ENCODE measurements at regions of chr5 and their contacts with region 1.

Region 1: GRCh38 chr5:128201065-128201926 is 117.7 kb downstream of the SLC12A2 start:
- DNase-seq: peak; percentile 52 to 91
- H3K4me3 ChIP-seq: peak overlapping the region; percentile 4
- H3K4me1 ChIP-seq: peaks cover 7% of the 10 kb centered on the region; the same call in 1 of the 2 replicates
- H3K27me3 ChIP-seq: no peaks in the 10 kb centered on the region

Region 2: DNA sequence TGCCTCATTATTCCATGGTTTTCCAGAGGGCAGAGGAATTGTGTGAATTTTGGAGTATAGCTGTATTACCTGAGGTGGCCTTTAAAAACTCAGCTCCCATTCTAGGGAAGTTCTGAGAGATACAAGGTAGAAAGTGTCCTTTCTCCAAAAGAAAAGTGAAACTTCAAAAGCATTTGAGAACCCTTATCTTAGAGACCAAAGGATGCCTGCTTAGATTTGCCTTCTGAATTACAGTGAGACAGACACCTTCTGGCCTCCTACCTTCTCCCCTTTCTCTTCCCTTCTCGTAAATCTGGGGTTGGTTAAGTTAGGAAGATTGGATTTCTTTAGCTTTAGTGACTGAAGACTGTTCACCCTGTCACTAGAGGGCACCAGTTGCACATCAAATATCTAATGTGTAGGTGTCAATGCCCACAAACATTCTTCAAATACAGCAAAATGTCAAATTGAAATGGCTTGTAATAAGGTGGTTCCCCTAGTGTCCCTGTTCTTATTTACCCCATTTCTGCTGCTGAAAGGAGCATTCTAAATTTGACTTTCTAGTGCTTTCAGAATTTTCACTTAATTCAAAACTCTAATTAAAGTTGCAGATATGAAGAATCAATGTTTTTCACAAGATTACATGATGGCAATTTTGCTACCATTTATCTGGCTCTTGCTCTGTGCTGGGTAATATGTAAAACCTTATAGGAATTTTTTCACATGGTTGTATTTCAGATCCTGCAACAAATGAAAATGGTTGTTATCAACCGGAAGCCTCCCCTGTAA is 637.1 kb before region 1 on chr5:
- in situ Hi-C with region 1: loop called (anchors 5 kb)
- DNase-seq: peak; percentile 67 to 76
- H3K4me3 ChIP-seq: no peak overlapping the region
- H3K4me1 ChIP-seq: no peaks in the 10 kb centered on the region
- H3K27me3 ChIP-seq: peaks cover 4% of the 10 kb centered on the region

Region 3: DNA sequence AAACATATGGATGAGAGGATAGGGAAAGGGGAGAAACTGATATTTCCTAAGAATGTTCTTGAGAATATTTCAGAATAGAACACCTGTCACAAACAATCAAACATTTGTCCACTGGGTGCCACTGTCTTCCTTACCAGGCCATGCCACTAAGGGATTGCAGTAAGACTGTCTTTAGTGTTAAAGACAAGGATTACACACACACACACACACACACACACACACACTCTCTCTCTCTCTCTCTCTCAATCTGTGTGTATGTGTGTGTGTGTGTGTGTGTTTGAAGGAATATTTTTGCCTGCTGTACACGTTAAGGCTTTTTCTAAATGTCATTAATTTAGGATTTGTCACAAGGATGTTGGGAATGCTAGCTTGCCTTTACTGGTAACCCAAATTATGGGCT is 443.7 kb before region 1 on chr5:
- in situ Hi-C with region 1: loop called (anchors 10 kb)
- DNase-seq: peak; percentile 29 to 57
- H3K4me3 ChIP-seq: no peak overlapping the region
- H3K4me1 ChIP-seq: peaks cover 9% of the 10 kb centered on the region
- H3K27me3 ChIP-seq: no peaks in the 10 kb centered on the region

Region 4: GRCh38 chr5:129767906-129768380 is 1566.6 kb after region 1 on chr5:
- in situ Hi-C with region 1: loop called (anchors 25 kb)
- DNase-seq: peak; percentile 80 to 88
- H3K4me3 ChIP-seq: no peak overlapping the region
- H3K4me1 ChIP-seq: no peaks in the 10 kb centered on the region
- H3K27me3 ChIP-seq: no peaks in the 10 kb centered on the region; the same call in 1 of the 2 replicates

Measured in HAP-1 (cell line).